ENCODE measurements at regions of chr16 and their contacts with region 1.

Region 1: GRCh38 chr16:88672776-88673175 is 9.9 kb upstream of the MVD start:
- DNase-seq: peak; percentile 58 to 83
- H3K4me3 ChIP-seq: no peak overlapping the region
- H3K27ac ChIP-seq: no peak overlapping the region
- H3K4me1 ChIP-seq: peaks cover 0 to 5% (median 3%) of the 10 kb centered on the region in 4 experiments; a peak in 4 of 7 replicates
- H3K27me3 ChIP-seq: no peaks in the 10 kb centered on the region
- CTCF ChIP-seq: peak; percentile 77 to 92 (median 90)
- EP300 ChIP-seq: no peak
- POLR2A ChIP-seq: no peak
- RAD21 ChIP-seq: peak; percentile 50 to 60

Region 2: GRCh38 chr16:88194397-88195268 is 478.1 kb before region 1 on chr16:
- CTCF ChIA-PET with region 1: no interaction called
- POLR2A ChIA-PET with region 1: no interaction called
- DNase-seq: no peak
- H3K4me3 ChIP-seq: no peak overlapping the region
- H3K27ac ChIP-seq: no peak overlapping the region
- H3K4me1 ChIP-seq: peaks cover 0 to 2% (median 0%) of the 10 kb centered on the region in 4 experiments; a peak in 2 of 7 replicates
- H3K27me3 ChIP-seq: no peaks in the 10 kb centered on the region
- CTCF ChIP-seq: no peak
- EP300 ChIP-seq: no peak
- POLR2A ChIP-seq: no peak
- RAD21 ChIP-seq: no peak

Region 3: GRCh38 chr16:88497561-88498462 is 175.0 kb before region 1 on chr16:
- CTCF ChIA-PET with region 1: no interaction called
- POLR2A ChIA-PET with region 1: no interaction called
- DNase-seq: no peak
- H3K4me3 ChIP-seq: no peak overlapping the region
- H3K27ac ChIP-seq: no peak overlapping the region
- H3K4me1 ChIP-seq: no peaks in the 10 kb centered on the region; a peak in 1 of 7 replicates
- H3K27me3 ChIP-seq: no peaks in the 10 kb centered on the region
- CTCF ChIP-seq: no peak
- EP300 ChIP-seq: no peak
- POLR2A ChIP-seq: no peak
- RAD21 ChIP-seq: no peak

Region 4: GRCh38 chr16:88561485-88562369 is 111.0 kb before region 1 on chr16:
- CTCF ChIA-PET with region 1: no interaction called
- POLR2A ChIA-PET with region 1: no interaction called
- DNase-seq: peak in 1 of 2 experiments; percentile 74
- H3K4me3 ChIP-seq: no peak overlapping the region
- H3K27ac ChIP-seq: no peak overlapping the region
- H3K4me1 ChIP-seq: no peaks in the 10 kb centered on the region
- H3K27me3 ChIP-seq: peaks cover 0 to 6% (median 0%) of the 10 kb centered on the region in 4 experiments; a peak in 3 of 7 replicates
- CTCF ChIP-seq: peak; percentile 67 to 81 (median 77)
- EP300 ChIP-seq: no peak
- POLR2A ChIP-seq: no peak
- RAD21 ChIP-seq: peak; percentile 76 to 80

Region 5: DNA sequence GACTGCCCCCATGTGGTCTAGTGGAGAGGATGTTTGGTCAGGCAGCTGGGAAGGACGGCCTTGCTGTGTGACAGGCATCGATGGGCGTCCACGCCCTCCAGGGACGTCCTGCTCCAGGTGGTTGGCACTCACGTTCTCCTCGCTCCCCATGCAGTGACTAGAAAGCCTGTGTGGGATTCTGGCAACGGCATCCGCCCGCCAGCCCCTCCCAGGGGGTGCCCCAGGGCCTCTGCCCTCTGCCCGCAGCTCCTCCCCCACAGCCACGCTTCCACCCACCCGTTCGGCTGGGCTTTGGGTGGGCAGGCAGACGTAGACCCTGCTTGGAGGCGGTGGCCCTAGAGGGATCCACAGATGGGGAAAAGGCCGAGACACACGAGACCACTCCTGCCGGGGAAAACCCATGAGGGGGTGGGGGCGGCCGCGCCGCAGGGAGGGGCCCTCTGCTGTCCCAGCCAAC is 39.1 kb before region 1 on chr16:
- CTCF ChIA-PET with region 1: interaction called, 17 read pairs
- POLR2A ChIA-PET with region 1: interaction called, 13 read pairs
- DNase-seq: peak in 1 of 2 experiments; percentile 73
- H3K4me3 ChIP-seq: peak overlapping the region; percentile 39 to 72 (median 48); a peak in 6 of 8 replicates
- H3K27ac ChIP-seq: no peak overlapping the region
- H3K4me1 ChIP-seq: peaks cover 1 to 32% (median 16%) of the 10 kb centered on the region in 4 experiments
- H3K27me3 ChIP-seq: peaks cover 0 to 4% (median 0%) of the 10 kb centered on the region in 4 experiments; a peak in 2 of 7 replicates
- CTCF ChIP-seq: peak; percentile 62 to 79 (median 77)
- EP300 ChIP-seq: no peak
- POLR2A ChIP-seq: no peak
- RAD21 ChIP-seq: peak; percentile 49 to 59; a peak in 3 of 4 replicates

Region 6: GRCh38 chr16:88686439-88687253 is 13.9 kb after region 1 on chr16 and contains the start of gene SNAI3:
- CTCF ChIA-PET with region 1: interaction called, 87 read pairs
- POLR2A ChIA-PET with region 1: interaction called, 8 read pairs
- DNase-seq: peak; percentile 23 to 98
- H3K4me3 ChIP-seq: peak within 1 kb of the TSS; percentile 61 to 77 (median 69)
- H3K27ac ChIP-seq: no peak within 1 kb of the TSS
- H3K4me1 ChIP-seq: peaks cover 0 to 8% (median 6%) of the 10 kb centered on the region in 4 experiments; a peak in 6 of 7 replicates
- H3K27me3 ChIP-seq: peaks cover 0 to 12% (median 9%) of the 10 kb centered on the region in 4 experiments; a peak in 3 of 7 replicates
- CTCF ChIP-seq: no peak
- EP300 ChIP-seq: no peak
- POLR2A ChIP-seq: peak in 1 of 2 experiments; percentile 19; a peak in 1 of 3 replicates
- RAD21 ChIP-seq: no peak
- total RNA-seq, gene SNAI3: 8.5 and 8.7 TPM in 2 replicates

Region 7: GRCh38 chr16:88697831-88698615 is 25.2 kb after region 1 on chr16:
- CTCF ChIA-PET with region 1: interaction called, 37 read pairs
- POLR2A ChIA-PET with region 1: interaction called, 3 read pairs
- DNase-seq: no peak
- H3K4me3 ChIP-seq: no peak overlapping the region
- H3K27ac ChIP-seq: no peak overlapping the region
- H3K4me1 ChIP-seq: no peaks in the 10 kb centered on the region
- H3K27me3 ChIP-seq: no peaks in the 10 kb centered on the region
- CTCF ChIP-seq: peak; percentile 67 to 76 (median 76)
- EP300 ChIP-seq: no peak
- POLR2A ChIP-seq: no peak
- RAD21 ChIP-seq: peak; percentile 67 to 69

Region 8: DNA sequence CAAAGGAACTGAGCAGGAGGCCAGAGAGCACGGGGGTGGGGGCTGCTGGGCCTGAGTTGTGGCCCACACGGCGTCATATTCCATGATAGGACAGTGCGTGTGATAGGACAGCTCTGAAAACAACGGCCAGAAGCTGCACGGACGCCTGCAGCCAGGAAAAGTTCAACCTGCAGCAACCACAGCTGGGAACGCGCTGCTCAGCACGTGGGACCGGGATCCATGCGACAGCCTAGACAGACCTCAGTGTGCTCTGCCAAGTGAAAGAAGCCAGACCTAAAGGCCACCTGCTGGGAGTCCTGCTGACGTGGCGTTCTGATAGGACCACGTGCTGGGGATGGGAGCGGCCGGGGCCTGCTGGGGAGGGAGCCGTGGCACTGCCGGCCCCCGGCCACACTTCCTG is 55.1 kb after region 1 on chr16:
- CTCF ChIA-PET with region 1: no interaction called
- POLR2A ChIA-PET with region 1: no interaction called
- DNase-seq: no peak
- H3K4me3 ChIP-seq: no peak overlapping the region
- H3K27ac ChIP-seq: no peak overlapping the region
- H3K4me1 ChIP-seq: no peaks in the 10 kb centered on the region
- H3K27me3 ChIP-seq: no peaks in the 10 kb centered on the region
- CTCF ChIP-seq: no peak
- EP300 ChIP-seq: no peak
- POLR2A ChIP-seq: no peak
- RAD21 ChIP-seq: no peak